ENCODE measurements at regions of chr4 and their contacts with region 1.

Region 1: GRCh38 chr4:121096629-121097028 is 24.3 kb upstream of the NDNF start:
- DNase-seq: no peak
- ATAC-seq: no peak
- H3K4me3 ChIP-seq: no peak overlapping the region
- H3K27ac ChIP-seq: no peak overlapping the region
- H3K4me1 ChIP-seq: no peaks in the 10 kb centered on the region
- H3K27me3 ChIP-seq: no peaks in the 10 kb centered on the region
- CTCF ChIP-seq: peak; percentile 66

Region 2: GRCh38 chr4:120071192-120071795 is 1025.3 kb before region 1 on chr4:
- intact Hi-C with region 1: loop called (anchors 10 kb)
- DNase-seq: no peak
- ATAC-seq: no peak
- H3K4me3 ChIP-seq: no peak overlapping the region
- H3K27ac ChIP-seq: no peak overlapping the region
- H3K4me1 ChIP-seq: peaks cover 30% of the 10 kb centered on the region
- H3K27me3 ChIP-seq: no peaks in the 10 kb centered on the region
- CTCF ChIP-seq: peak; percentile 76

Region 3: GRCh38 chr4:120156120-120156718 is 940.4 kb before region 1 on chr4:
- intact Hi-C with region 1: loop called (anchors 5 kb)
- DNase-seq: no peak
- ATAC-seq: peak in 1 of 4 donors; percentile 64
- H3K4me3 ChIP-seq: no peak overlapping the region
- H3K27ac ChIP-seq: no peak overlapping the region
- H3K4me1 ChIP-seq: no peaks in the 10 kb centered on the region
- H3K27me3 ChIP-seq: no peaks in the 10 kb centered on the region
- CTCF ChIP-seq: peak; percentile 75

Region 4: DNA sequence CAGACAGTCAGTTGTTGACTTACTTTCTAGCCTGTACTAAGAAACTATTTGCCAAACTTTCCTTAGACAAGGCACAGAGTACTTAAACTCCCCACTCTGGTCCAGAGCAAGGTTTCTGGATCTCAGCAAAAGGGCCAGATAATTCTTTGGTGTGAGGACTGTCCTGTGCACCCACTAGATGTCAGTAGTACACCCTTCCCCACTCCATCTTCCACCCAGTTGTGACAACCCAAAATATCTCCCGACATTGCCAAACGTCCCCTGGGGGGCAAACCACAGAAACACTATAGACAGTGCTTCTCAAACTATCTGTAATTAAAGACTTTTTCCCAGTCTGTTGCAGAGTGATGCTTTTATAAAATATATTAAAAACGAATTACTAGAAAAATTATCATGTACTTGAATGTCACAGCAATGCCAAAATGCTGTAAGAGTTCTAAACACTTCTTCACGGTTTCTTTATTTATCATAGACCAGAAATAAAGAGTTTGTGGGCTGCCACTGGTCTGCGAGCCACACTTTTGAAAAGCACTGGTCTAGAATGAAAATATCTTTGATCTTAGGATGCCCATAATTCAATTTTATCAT is 377.6 kb before region 1 on chr4:
- intact Hi-C with region 1: loop called (anchors 5 to 10 kb)
- DNase-seq: peak in 1 of 2 donors; percentile 12
- ATAC-seq: peak; percentile 57 to 79 (median 66)
- H3K4me3 ChIP-seq: no peak overlapping the region
- H3K27ac ChIP-seq: no peak overlapping the region
- H3K4me1 ChIP-seq: no peaks in the 10 kb centered on the region
- H3K27me3 ChIP-seq: no peaks in the 10 kb centered on the region
- CTCF ChIP-seq: peak; percentile 63

Measured in psoas muscle (tissue), 8 donors.